ENCODE measurements at regions of chr3 and their contacts with region 1.

Region 1: GRCh38 chr3:127574880-127575878 is 15.4 kb downstream of the TPRA1 start:
- DNase-seq: peak; percentile 71
- ATAC-seq: peak; percentile 91
- H3K4me3 ChIP-seq: no peak overlapping the region
- H3K27ac ChIP-seq: peak overlapping the region; percentile 38; the same call in 1 of the 2 replicates
- H3K4me1 ChIP-seq: peaks cover 0 to 4% of the 10 kb centered on the region in 2 experiments; a peak in 1 of 4 replicates
- H3K27me3 ChIP-seq: no peaks in the 10 kb centered on the region
- CTCF ChIP-seq: peak; percentile 76 to 99 (median 98)
- POLR2A ChIP-seq: no peak
- RAD21 ChIP-seq: peak; percentile 86

Region 2: DNA sequence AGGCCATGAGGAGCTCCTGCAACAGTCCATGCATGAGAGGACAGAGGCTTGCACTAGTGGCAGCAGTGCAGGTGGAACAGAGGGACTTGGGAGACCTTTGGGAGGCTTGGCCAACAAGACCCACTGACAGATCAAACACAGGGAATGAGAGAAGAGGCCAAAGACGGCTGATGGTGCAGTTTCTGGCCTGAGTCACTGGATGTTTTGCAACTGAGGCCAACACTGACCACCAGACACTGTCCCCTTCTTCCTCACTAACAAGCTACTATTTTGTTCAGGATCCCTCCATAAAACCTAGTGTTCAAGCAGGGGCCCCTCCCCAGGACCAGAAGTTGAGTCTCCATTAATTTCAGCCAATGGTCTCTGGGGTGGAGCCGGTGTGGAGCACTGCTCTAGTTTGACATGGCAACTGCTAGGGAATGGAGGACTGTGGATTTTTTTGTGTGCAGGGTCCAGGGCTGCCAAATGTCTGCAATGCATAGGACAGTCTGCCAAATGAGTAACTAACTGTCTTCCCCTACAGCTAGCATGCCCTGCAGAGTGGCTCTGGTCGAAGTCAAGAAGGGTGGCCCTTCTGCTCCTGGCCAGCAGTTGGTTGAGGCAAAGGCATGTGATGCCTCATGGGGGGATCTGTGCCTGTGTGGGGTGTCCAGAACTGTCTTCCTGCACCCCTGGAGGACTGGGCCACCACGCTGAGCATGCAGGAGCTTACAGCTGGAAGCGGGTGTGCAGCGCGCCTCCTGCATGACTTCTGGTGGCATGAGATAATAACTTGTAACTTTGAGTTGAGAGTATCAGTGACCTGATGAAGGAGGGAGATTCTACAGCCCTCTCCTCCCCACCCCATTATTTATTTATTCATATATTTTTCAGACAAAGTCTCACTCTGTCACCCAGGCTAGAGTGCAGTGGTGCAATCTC is 10.6 kb after region 1 on chr3:
- CTCF ChIA-PET with region 1: interaction called, 11 read pairs
- POLR2A ChIA-PET with region 1: no interaction called
- RAD21 ChIA-PET with region 1: no interaction called
- intact Hi-C with region 1: no loop called
- DNase-seq: no peak
- ATAC-seq: no peak
- H3K4me3 ChIP-seq: no peak overlapping the region
- H3K27ac ChIP-seq: no peak overlapping the region
- H3K4me1 ChIP-seq: peaks cover 6 to 16% of the 10 kb centered on the region in 2 experiments
- H3K27me3 ChIP-seq: no peaks in the 10 kb centered on the region
- CTCF ChIP-seq: no peak
- POLR2A ChIP-seq: no peak
- RAD21 ChIP-seq: no peak

Measured in HCT116 (cell line).